CD4-positive, alpha-beta memory T cell (primary cell): ENCODE measurements at regions of chr5 and their contacts with region 1.

Region 1: DNA sequence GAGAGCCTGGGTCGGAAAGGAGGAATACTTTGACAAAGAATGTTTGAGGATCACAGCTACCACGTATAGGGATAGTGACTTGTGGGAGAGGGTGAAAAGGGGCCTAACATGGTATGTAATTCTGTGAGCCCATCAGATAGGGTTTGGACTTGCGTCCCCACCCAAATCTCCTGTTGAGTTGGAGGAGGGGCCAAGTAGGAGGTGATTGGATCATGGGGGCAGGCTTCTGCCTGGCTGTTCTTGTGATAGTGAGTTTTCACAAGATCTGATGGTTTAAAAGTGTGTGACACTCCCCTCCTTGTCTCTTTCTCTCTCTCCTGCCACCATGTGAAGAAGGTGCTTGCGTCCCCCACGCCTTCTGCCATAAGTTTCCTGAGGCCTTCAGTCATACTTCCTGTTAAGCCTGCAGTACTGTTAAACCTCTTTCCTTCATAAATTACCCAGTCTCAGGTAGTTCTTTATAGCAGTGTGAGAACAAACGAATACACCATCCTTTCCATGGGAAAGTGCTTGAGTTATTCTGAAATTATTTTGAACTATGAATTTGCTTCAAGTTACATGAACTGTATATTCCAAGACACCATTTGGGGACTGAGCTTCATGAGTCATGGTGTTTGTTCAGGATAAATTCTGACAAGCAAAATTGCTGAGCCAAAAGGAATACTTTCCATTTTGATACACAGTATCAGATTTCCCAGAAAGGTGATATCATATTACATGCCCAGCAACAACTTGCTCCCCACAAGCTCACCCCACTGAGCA is 68.8 kb upstream of the SSBP2 start:
- DNase-seq: no peak
- H3K4me3 ChIP-seq: no peak overlapping the region
- H3K4me3 Mint-ChIP-seq: peak overlapping the region in 1 of 8 donors; percentile 5
- H3K27ac ChIP-seq: no peak overlapping the region
- H3K27ac Mint-ChIP-seq: peak overlapping the region in 6 of 7 donors; percentile 2 to 72 (median 20)
- H3K4me1 ChIP-seq: peaks cover 16% of the 10 kb centered on the region
- H3K4me1 Mint-ChIP-seq: peaks cover 19 to 51% (median 39%) of the 10 kb centered on the region in 4 donors
- H3K27me3 ChIP-seq: no peaks in the 10 kb centered on the region
- H3K27me3 Mint-ChIP-seq: peaks cover 2% of the 10 kb centered on the region in 2 donors

Region 2: GRCh38 chr5:81626524-81626923 is 193.2 kb before region 1 on chr5:
- CTCF ChIA-PET with region 1: no interaction called
- POLR2A ChIA-PET with region 1: no interaction called
- intact Hi-C with region 1: no loop called
- DNase-seq: no peak
- H3K4me3 ChIP-seq: no peak overlapping the region
- H3K4me3 Mint-ChIP-seq: no peak overlapping the region
- H3K27ac ChIP-seq: no peak overlapping the region
- H3K27ac Mint-ChIP-seq: no peak overlapping the region
- H3K4me1 ChIP-seq: peaks cover 11% of the 10 kb centered on the region
- H3K4me1 Mint-ChIP-seq: peaks cover 4 to 11% (median 7%) of the 10 kb centered on the region in 4 donors
- H3K27me3 ChIP-seq: no peaks in the 10 kb centered on the region
- H3K27me3 Mint-ChIP-seq: no peaks in the 10 kb centered on the region

Region 3: GRCh38 chr5:81779125-81779915 is 40.4 kb before region 1 on chr5:
- CTCF ChIA-PET with region 1: no interaction called
- POLR2A ChIA-PET with region 1: interaction called, 4 read pairs
- intact Hi-C with region 1: loop called (anchors 5 kb)
- DNase-seq: peak; percentile 18 to 48 (median 40)
- H3K4me3 ChIP-seq: peak overlapping the region; percentile 40 to 48
- H3K4me3 Mint-ChIP-seq: peak overlapping the region; percentile 84 to 92 (median 86)
- H3K27ac ChIP-seq: peak overlapping the region; percentile 69
- H3K27ac Mint-ChIP-seq: peak overlapping the region; percentile 85 to 97 (median 94)
- H3K4me1 ChIP-seq: peaks cover 17% of the 10 kb centered on the region
- H3K4me1 Mint-ChIP-seq: peaks cover 16 to 27% (median 20%) of the 10 kb centered on the region in 4 donors
- H3K27me3 ChIP-seq: no peaks in the 10 kb centered on the region
- H3K27me3 Mint-ChIP-seq: no peaks in the 10 kb centered on the region